ENCODE measurements at regions of chr9 and their contacts with region 1.

Region 1: DNA sequence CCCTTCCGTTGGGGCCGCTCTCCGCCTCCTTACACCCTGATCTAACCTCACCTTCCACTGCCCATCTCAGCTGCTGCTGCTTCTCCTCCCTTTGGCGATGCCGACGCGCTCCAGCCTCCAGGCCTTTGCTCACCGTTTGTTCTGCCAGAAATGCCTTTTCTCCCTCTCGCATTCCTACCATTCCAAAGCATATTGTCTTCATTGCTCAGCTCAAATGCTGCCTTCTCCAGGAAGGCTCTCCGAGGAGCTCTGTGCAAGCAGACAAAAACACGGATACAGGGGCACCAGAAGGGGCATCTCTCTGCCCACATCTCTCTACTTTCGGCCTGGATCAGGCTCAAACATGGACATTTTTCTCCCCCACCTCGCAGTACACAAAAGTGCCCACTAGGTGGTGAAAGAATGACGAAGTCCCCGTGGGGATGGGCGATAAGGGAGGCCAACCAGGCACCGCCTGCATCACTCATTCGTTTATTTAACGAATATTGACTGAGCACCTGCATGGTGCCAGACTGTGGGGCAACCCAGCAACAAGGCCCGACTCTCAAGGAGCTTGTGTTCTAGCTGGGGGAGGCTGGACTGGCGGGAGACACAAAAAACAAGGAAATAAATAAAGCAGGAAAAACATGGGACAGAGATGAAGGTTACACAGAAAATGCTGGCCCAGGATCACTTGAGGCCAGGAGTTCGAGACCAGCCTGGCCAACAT is 7.3 kb upstream of the GRHPR start:
- DNase-seq: peak in 1 of 2 donors; percentile 61
- ATAC-seq: peak; percentile 37 to 74 (median 62)
- H3K4me3 ChIP-seq: peak overlapping the region in 2 of 10 donors; percentile 1 to 25
- H3K27ac ChIP-seq: peak overlapping the region in 6 of 10 donors; percentile 4 to 50 (median 28)
- H3K4me1 ChIP-seq: peaks cover 0 to 17% (median 8%) of the 10 kb centered on the region in 9 donors
- H3K27me3 ChIP-seq: no peaks in the 10 kb centered on the region
- CTCF ChIP-seq: peak; percentile 68 to 84 (median 79)

Region 2: DNA sequence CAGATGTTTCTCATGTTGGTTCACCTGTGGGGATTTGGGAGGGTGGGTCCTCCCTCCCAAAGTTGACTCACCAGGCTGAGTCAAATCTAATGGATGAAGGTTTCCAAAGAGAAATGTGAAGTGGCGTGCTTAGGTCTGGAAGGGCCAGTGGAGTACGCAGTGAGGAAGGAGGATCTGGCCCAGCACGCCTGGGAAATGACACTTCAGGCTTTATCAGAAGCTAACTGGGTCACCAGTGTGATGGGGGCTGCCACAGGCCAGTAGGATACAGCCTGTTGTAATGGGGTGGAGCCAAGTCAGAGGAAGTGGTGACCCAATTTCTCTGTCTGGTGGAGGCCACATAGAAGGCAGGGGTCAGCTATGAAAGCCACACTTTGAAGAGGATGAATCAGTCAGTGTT is 88.6 kb after region 1 on chr9:
- intact Hi-C with region 1: loop called in 1 of 10 experiments (anchors 10 kb)
- DNase-seq: no peak
- ATAC-seq: peak in 6 of 8 donors; percentile 31 to 81 (median 54)
- H3K4me3 ChIP-seq: no peak overlapping the region
- H3K27ac ChIP-seq: no peak overlapping the region
- H3K4me1 ChIP-seq: no peaks in the 10 kb centered on the region
- H3K27me3 ChIP-seq: no peaks in the 10 kb centered on the region
- CTCF ChIP-seq: no peak